ENCODE measurements at regions of chr1 and their contacts with region 1.

Region 1: DNA sequence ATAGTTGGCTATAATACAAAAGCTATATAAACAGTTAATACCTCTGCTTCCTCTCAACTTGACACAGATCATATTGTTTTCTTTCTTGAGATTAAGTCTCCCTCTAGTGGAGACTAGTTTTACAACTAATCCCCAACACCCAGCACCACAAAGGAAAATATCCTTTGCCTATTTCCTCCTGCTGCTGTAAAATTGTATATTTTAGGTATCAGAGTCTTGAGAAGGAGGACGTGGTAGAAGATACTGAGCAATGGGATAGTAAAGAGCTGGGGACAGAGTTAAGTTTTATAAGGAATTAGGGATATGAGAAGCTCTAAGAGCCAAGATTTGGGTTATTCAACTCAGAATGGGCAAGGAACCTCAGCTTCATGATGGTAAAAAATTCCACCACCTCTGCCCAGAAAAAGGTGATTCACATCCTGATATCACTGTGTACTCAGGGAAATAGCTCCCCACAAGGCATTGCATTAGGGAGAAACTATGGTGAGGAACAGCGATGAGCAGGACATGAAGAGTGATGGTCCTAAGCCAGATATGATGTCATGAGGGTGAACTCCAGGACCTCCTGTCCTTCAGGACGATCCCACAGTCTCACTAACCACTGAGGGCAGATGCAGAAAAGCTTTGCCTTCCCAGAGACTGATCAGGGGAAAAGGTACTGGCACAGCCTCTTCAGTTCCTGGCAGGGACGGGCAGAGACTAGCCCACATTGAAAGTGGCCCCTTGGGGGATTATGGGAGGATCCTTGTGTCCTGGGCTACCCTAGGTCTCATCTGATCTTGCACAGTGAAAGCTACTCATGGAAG is 14.7 kb upstream of the CFAP126 start:
- DNase-seq: no peak
- ATAC-seq: peak; percentile 62 to 88 (median 76)
- H3K4me3 ChIP-seq: no peak overlapping the region
- H3K27ac ChIP-seq: peak overlapping the region in 3 of 12 donors; percentile 56 to 73 (median 70)
- H3K4me1 ChIP-seq: peaks cover 0 to 34% (median 0%) of the 10 kb centered on the region in 12 donors
- H3K27me3 ChIP-seq: no peaks in the 10 kb centered on the region
- CTCF ChIP-seq: peak; percentile 51 to 83 (median 66)
- POLR2A ChIP-seq: no peak

Region 2: DNA sequence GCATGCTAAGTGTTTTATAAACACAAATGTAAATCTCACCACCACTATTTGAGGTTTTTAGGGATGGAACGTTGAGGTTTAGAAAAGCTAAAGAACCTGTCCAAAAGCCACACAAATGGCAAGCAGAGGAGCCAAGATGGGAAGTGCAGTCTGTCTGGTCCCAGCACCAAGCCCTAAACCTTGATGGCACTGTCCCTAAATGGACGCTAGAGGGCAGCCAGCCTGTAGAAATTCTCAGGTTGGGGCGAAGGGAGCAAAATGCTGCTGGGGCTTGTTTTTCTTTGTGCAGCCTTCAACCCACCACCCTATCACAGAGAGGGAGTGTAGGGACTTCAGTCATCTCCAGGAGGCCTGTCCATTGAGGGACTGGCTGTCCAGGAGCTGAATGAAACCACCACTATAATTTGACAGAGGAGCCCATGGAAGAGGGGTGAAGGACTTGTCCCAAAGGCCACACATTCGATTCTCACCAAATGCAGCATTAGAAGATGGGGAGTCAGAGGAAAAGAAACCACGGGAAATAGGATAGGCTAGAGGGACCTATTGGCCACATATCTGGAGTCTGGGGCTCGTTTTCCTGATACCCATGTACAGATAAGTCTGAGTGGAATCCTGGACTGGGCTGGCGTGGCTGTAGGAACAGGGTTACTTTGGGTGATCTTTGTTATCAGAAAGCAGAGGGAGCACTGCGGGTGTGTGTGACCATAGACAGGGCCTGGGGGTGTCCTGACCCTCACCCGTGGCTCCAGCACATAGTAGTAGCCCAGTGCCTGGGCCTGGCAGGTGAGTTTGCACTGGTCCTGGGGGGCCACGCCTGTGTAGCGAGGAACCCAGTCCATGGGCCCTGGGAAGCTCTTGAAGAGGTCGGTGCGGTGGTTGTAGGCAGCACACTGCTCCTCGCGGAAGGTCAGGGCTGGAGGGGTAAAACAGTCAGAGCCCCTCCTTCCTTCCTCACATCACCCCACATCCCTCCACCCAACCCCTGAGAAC is 189.6 kb before region 1 on chr1:
- intact Hi-C with region 1: loop called in 4 of 10 experiments (anchors 5 to 10 kb)
- DNase-seq: peak in 4 of 5 donors; percentile 57 to 70 (median 68)
- ATAC-seq: peak; percentile 30 to 62 (median 50)
- H3K4me3 ChIP-seq: peak overlapping the region in 3 of 12 donors; percentile 56 to 62 (median 60)
- H3K27ac ChIP-seq: peak overlapping the region in 6 of 12 donors; percentile 3 to 98 (median 62)
- H3K4me1 ChIP-seq: peaks cover 0 to 73% (median 32%) of the 10 kb centered on the region in 12 donors
- H3K27me3 ChIP-seq: no peaks in the 10 kb centered on the region
- CTCF ChIP-seq: peak; percentile 80 to 92 (median 87)
- POLR2A ChIP-seq: no peak

Region 3: GRCh38 chr1:161201828-161202725 is 180.3 kb before region 1 on chr1 and contains the start of gene NDUFS2:
- intact Hi-C with region 1: loop called in 5 of 10 experiments (anchors 5 to 10 kb)
- DNase-seq: peak; percentile 97 to 99 (median 99)
- ATAC-seq: peak; percentile 81 to 92 (median 84)
- H3K4me3 ChIP-seq: peak within 1 kb of the TSS; percentile 66 to 92 (median 80)
- H3K27ac ChIP-seq: peak within 1 kb of the TSS; percentile 93 to 99 (median 97)
- H3K4me1 ChIP-seq: peaks cover 6 to 91% (median 78%) of the 10 kb centered on the region in 12 donors
- H3K27me3 ChIP-seq: no peaks in the 10 kb centered on the region
- CTCF ChIP-seq: peak in 2 of 12 donors; percentile 7 to 25
- POLR2A ChIP-seq: peak; percentile 83 to 86
- total RNA-seq, gene NDUFS2: 214 to 460 (median 297) TPM

Region 4: GRCh38 chr1:161209790-161210409 is 172.5 kb before region 1 on chr1:
- intact Hi-C with region 1: loop called in 6 of 10 experiments (anchors 5 kb)
- DNase-seq: peak; percentile 76 to 86 (median 82)
- ATAC-seq: peak; percentile 21 to 76 (median 58)
- H3K4me3 ChIP-seq: no peak overlapping the region
- H3K27ac ChIP-seq: peak overlapping the region in 5 of 12 donors; percentile 28 to 98 (median 88)
- H3K4me1 ChIP-seq: peaks cover 0 to 49% (median 27%) of the 10 kb centered on the region in 12 donors
- H3K27me3 ChIP-seq: no peaks in the 10 kb centered on the region
- CTCF ChIP-seq: peak; percentile 76 to 91 (median 87)
- POLR2A ChIP-seq: peak in 1 of 2 donors; percentile 13

Region 5: GRCh38 chr1:161305867-161306519 is 76.4 kb before region 1 on chr1:
- intact Hi-C with region 1: loop called in 2 of 10 experiments (anchors 5 to 10 kb)
- DNase-seq: peak; percentile 73 to 90 (median 81)
- ATAC-seq: peak; percentile 80 to 95 (median 94)
- H3K4me3 ChIP-seq: peak overlapping the region; percentile 40 to 88 (median 76)
- H3K27ac ChIP-seq: peak overlapping the region in 10 of 12 donors; percentile 23 to 87 (median 50)
- H3K4me1 ChIP-seq: peaks cover 0 to 42% (median 12%) of the 10 kb centered on the region in 12 donors
- H3K27me3 ChIP-seq: no peaks in the 10 kb centered on the region
- CTCF ChIP-seq: peak in 5 of 12 donors; percentile 12 to 40 (median 25)
- POLR2A ChIP-seq: peak in 1 of 2 donors; percentile 42

Region 6: GRCh38 chr1:161314201-161314981 is 68.0 kb before region 1 on chr1 and contains the start of gene SDHC:
- intact Hi-C with region 1: loop called in 3 of 10 experiments (anchors 5 to 10 kb)
- DNase-seq: peak; percentile 90 to 95 (median 91)
- ATAC-seq: peak; percentile 98 to 100 (median 99)
- H3K4me3 ChIP-seq: peak within 1 kb of the TSS; percentile 70 to 96 (median 87)
- H3K27ac ChIP-seq: peak within 1 kb of the TSS; percentile 91 to 98 (median 94)
- H3K4me1 ChIP-seq: peaks cover 0 to 25% (median 15%) of the 10 kb centered on the region in 12 donors
- H3K27me3 ChIP-seq: no peaks in the 10 kb centered on the region
- CTCF ChIP-seq: peak in 6 of 12 donors; percentile 11 to 29 (median 22)
- POLR2A ChIP-seq: peak in 1 of 2 donors; percentile 72
- total RNA-seq, gene SDHC: 113 to 408 (median 314) TPM